GM18951 (cell line): ENCODE measurements at regions of chr9 and their contacts with region 1.

Region 1: GRCh38 chr9:76297721-76298239 is 96.4 kb downstream of the RFK start:
- POLR2A ChIP-seq: no peak

Region 2: GRCh38 chr9:75265525-75265972 is 1032.2 kb before region 1 on chr9:
- in situ Hi-C with region 1: loop called (anchors 25 kb)
- POLR2A ChIP-seq: no peak

Region 3: GRCh38 chr9:76232861-76233489 is 64.8 kb before region 1 on chr9:
- in situ Hi-C with region 1: no loop called
- POLR2A ChIP-seq: no peak